MCF 10A (cell line): ENCODE measurements at regions of chr13 and their contacts with region 1.

Region 1: GRCh38 chr13:38872693-38873092 is 117.9 kb downstream of the STOML3 start:
- DNase-seq: peak; percentile 68
- H3K4me3 Mint-ChIP-seq: no peak overlapping the region
- H3K27ac Mint-ChIP-seq: no peak overlapping the region
- H3K4me1 Mint-ChIP-seq: no peaks in the 10 kb centered on the region
- H3K27me3 Mint-ChIP-seq: peaks cover 70% of the 10 kb centered on the region
- CTCF ChIP-seq: peak; percentile 49

Region 2: GRCh38 chr13:38670627-38671026 is 202.1 kb before region 1 on chr13:
- CTCF ChIA-PET with region 1: interaction called, 34 read pairs
- POLR2A ChIA-PET with region 1: no interaction called
- intact Hi-C with region 1: no loop called
- DNase-seq: peak; percentile 75
- H3K4me3 Mint-ChIP-seq: no peak overlapping the region
- H3K27ac Mint-ChIP-seq: no peak overlapping the region
- H3K4me1 Mint-ChIP-seq: no peaks in the 10 kb centered on the region
- H3K27me3 Mint-ChIP-seq: peaks cover 52% of the 10 kb centered on the region
- CTCF ChIP-seq: no peak

Region 3: DNA sequence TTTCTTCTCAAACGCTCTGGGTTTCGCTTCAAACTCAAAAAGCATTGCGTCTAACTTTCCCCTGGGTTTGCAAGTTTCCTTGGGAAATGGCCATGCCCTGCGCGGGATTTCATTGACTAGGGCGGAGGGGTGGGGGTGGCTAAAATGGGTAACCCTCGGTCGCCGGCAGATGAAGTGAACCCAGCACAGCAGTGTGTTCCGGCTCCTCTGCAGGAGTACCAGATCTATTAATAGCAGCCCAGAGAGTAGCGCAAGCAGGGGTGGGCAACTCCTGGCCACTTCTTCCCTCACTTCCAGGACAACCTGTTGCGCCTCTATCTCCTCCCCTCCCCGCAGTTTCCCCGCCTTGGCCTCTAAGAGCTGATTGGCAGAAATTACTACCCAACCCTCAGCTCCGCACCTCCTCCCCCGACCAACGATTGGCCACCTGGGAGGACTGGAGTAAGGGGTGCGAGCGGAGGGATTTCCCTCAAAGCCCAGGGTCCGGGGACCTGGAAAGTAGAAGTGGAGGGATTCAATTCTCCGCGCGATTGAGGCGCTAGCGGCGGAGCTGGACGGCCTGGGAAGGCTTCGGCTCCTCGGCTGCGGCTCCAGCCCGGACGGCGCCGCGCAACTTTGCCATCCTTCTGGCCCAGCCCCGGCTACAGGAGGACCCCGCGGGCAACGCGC is 186.0 kb before region 1 on chr13 and contains the start of gene FREM2:
- CTCF ChIA-PET with region 1: interaction called, 18 read pairs
- POLR2A ChIA-PET with region 1: interaction called, 5 read pairs
- intact Hi-C with region 1: loop called (anchors 5 kb)
- DNase-seq: peak; percentile 73
- H3K4me3 Mint-ChIP-seq: peak within 1 kb of the TSS; percentile 71
- H3K27ac Mint-ChIP-seq: no peak within 1 kb of the TSS
- H3K4me1 Mint-ChIP-seq: peaks cover 7% of the 10 kb centered on the region
- H3K27me3 Mint-ChIP-seq: no peaks in the 10 kb centered on the region
- CTCF ChIP-seq: no peak
- total RNA-seq, gene FREM2: not detected in 2 replicates

Region 4: GRCh38 chr13:38888309-38888708 is 15.6 kb after region 1 on chr13:
- CTCF ChIA-PET with region 1: interaction called, 31 read pairs
- POLR2A ChIA-PET with region 1: no interaction called
- intact Hi-C with region 1: no loop called
- DNase-seq: peak; percentile 49
- H3K4me3 Mint-ChIP-seq: no peak overlapping the region
- H3K27ac Mint-ChIP-seq: no peak overlapping the region
- H3K4me1 Mint-ChIP-seq: peaks cover 8% of the 10 kb centered on the region
- H3K27me3 Mint-ChIP-seq: peaks cover 34% of the 10 kb centered on the region
- CTCF ChIP-seq: no peak